WTC11 (cell line): ENCODE measurements at regions of chrX and their contacts with region 1.

Region 1: DNA sequence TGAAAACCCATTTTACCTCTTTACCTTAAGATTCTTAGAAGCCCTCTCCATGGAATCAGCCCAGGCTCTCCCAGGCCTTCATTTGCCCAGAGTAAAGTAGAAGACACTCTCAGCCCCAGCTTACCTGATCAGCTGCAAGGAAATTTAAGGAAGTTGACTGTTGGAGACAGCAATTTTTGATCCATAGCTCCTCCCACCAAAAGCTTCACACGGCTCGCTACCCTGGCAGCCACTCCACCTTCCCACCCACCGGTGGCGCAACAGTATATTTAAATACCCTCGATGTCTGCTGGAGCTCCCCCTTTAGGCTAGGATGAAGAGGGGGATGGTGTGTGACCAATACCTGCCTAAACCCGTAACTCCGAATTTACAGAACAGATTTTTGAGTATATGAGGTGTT is 75.4 kb downstream of the MBNL3 start:
- DNase-seq: peak; percentile 62
- ATAC-seq: peak; percentile 90
- H3K4me3 Mint-ChIP-seq: peak overlapping the region; percentile 65
- H3K27ac Mint-ChIP-seq: no peak overlapping the region
- H3K4me1 Mint-ChIP-seq: peaks cover 60% of the 10 kb centered on the region
- H3K27me3 Mint-ChIP-seq: peaks cover 32% of the 10 kb centered on the region
- CTCF ChIP-seq: no peak

Region 2: GRCh38 chrX:132292793-132293192 is 120.7 kb before region 1 on chrX:
- CTCF ChIA-PET with region 1: interaction called, 12 read pairs
- POLR2A ChIA-PET with region 1: no interaction called
- DNase-seq: no peak
- ATAC-seq: peak; percentile 60
- H3K4me3 Mint-ChIP-seq: no peak overlapping the region
- H3K27ac Mint-ChIP-seq: no peak overlapping the region
- H3K4me1 Mint-ChIP-seq: no peaks in the 10 kb centered on the region
- H3K27me3 Mint-ChIP-seq: no peaks in the 10 kb centered on the region
- CTCF ChIP-seq: peak; percentile 19; the same call in 1 of the 2 replicates

Region 3: GRCh38 chrX:132442691-132443090 is 29.2 kb after region 1 on chrX:
- CTCF ChIA-PET with region 1: no interaction called
- POLR2A ChIA-PET with region 1: no interaction called
- DNase-seq: no peak
- ATAC-seq: no peak
- H3K4me3 Mint-ChIP-seq: no peak overlapping the region
- H3K27ac Mint-ChIP-seq: no peak overlapping the region
- H3K4me1 Mint-ChIP-seq: peaks cover 5% of the 10 kb centered on the region; the same call in 1 of the 2 replicates
- H3K27me3 Mint-ChIP-seq: no peaks in the 10 kb centered on the region; the same call in 1 of the 2 replicates
- CTCF ChIP-seq: no peak

Region 4: GRCh38 chrX:132463411-132463810 is 50.0 kb after region 1 on chrX:
- CTCF ChIA-PET with region 1: interaction called, 10 read pairs
- POLR2A ChIA-PET with region 1: no interaction called
- DNase-seq: peak; percentile 30
- ATAC-seq: no peak
- H3K4me3 Mint-ChIP-seq: no peak overlapping the region
- H3K27ac Mint-ChIP-seq: no peak overlapping the region
- H3K4me1 Mint-ChIP-seq: no peaks in the 10 kb centered on the region
- H3K27me3 Mint-ChIP-seq: no peaks in the 10 kb centered on the region; the same call in 1 of the 2 replicates
- CTCF ChIP-seq: peak; percentile 55

Region 5: DNA sequence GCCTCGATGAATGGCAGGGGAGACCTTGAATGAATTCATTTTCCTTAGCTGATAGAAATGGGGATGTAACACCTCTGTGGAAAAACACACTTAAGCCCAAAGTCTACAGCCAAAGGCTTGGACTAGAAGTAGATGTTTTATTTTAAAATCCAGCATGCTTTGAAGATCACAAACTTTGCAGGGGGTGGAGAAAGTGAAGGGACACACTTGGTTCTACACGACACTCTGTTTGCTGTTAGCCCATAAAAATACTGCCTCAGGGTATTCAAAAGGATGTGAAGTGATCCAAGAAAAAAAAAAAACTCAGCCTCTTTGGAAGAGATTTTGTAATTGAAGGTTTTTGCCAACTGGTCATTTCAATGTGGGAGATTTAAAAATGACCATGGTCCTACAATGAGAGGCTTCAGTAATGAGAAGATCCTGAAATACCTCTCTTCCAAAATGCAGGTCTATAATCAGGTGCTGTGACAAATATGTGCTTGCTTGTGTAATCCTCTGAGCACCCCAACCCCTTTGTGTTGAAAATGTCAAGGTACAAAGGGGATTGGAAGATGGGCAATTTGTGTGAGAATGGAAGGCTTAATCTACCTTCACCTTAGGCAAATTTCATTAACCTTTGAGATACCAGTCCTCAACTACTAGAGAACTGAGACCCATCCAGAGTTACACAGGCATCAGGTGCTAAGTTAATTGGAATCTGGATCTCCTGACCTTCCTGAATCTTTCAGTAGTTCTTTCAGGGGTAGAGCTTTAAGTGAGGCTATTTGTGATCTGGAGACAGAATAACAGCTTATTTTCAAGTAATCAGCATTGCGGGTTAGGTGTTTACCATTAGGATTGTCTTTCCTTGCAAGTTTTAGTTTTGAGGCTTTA is 462.4 kb after region 1 on chrX:
- CTCF ChIA-PET with region 1: no interaction called
- POLR2A ChIA-PET with region 1: no interaction called
- DNase-seq: no peak
- ATAC-seq: peak; percentile 77
- H3K4me3 Mint-ChIP-seq: peak overlapping the region; percentile 57
- H3K27ac Mint-ChIP-seq: peak overlapping the region; percentile 89
- H3K4me1 Mint-ChIP-seq: peaks cover 70% of the 10 kb centered on the region
- H3K27me3 Mint-ChIP-seq: peaks cover 11% of the 10 kb centered on the region
- CTCF ChIP-seq: no peak